Dorsolateral prefrontal cortex (tissue), 120 donors: ENCODE measurements at regions of chrX and their contacts with region 1.

Region 1: GRCh38 chrX:72126539-72127140 is 5.1 kb downstream of the RTL5 start:
- DNase-seq: peak; percentile 77 to 93 (median 84)
- H3K4me3 ChIP-seq: no peak overlapping the region
- H3K27ac ChIP-seq: peak overlapping the region in 34 of 59 donors; percentile 7 to 85 (median 45)
- H3K27me3 ChIP-seq: peaks cover 0 to 95% (median 33%) of the 10 kb centered on the region in 45 donors
- CTCF ChIP-seq: peak; percentile 35 to 94 (median 84)

Region 2: DNA sequence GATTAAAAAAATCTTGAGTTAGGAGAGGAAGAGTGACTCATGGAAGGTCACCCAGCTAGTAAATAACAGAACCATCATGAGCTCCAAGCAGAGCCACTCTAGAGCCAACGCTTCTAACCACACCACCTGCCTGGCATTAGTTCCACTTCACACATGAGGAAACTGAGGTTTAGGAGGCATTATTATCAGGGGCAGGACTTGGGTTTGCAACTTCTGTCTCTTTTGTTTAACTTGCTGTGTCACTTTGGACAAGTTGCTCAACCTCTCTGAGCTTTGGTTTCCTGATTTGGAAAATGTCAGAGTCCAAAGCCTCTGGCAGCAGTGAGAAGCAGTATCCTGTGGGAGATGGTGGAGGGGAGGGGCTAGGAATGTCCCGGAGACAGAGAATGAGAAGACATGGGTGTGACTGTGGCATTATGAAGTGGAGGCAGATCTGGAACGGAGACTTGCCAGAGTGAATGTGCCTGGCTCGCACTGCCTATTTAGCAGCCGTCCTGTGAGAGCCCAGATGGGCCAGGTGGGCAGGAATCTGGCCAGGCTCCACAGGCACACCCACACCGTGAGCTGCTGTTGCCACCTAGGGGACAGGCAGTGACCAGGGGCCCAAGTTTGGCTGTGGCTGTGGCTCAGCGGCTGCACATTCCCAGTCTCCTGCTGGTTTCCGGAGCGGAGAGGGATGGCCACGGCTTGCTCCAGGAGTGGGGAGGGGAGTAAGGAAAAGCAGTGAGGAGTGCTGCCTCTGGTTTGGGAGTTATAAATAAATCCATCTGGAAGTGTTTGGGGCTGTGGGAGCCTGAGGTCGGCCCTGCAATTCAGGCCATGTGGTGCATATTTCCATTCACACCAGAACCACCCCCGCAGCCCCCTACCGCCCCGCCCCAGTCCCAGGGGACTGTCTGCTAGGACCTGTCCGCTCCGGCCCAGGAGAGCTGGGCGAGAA is 122.6 kb before region 1 on chrX:
- intact Hi-C with region 1: loop called in 1 of 2 experiments (anchors 5 kb)
- DNase-seq: peak in 4 of 10 donors; percentile 36 to 49 (median 40)
- H3K4me3 ChIP-seq: no peak overlapping the region
- H3K27ac ChIP-seq: peak overlapping the region in 11 of 59 donors; percentile 2 to 57 (median 28)
- H3K27me3 ChIP-seq: peaks cover 0 to 88% (median 31%) of the 10 kb centered on the region in 45 donors
- CTCF ChIP-seq: peak in 6 of 56 donors; percentile 8 to 17 (median 12)

Region 3: GRCh38 chrX:72018277-72019112 is 108.1 kb before region 1 on chrX:
- intact Hi-C with region 1: loop called (anchors 2 kb)
- DNase-seq: peak; percentile 59 to 87 (median 70)
- H3K4me3 ChIP-seq: peak overlapping the region in 40 of 59 donors; percentile 5 to 57 (median 30)
- H3K27ac ChIP-seq: peak overlapping the region in 40 of 59 donors; percentile 13 to 81 (median 62)
- H3K27me3 ChIP-seq: peaks cover 0 to 82% (median 31%) of the 10 kb centered on the region in 45 donors
- CTCF ChIP-seq: peak; percentile 31 to 90 (median 73)

Region 4: DNA sequence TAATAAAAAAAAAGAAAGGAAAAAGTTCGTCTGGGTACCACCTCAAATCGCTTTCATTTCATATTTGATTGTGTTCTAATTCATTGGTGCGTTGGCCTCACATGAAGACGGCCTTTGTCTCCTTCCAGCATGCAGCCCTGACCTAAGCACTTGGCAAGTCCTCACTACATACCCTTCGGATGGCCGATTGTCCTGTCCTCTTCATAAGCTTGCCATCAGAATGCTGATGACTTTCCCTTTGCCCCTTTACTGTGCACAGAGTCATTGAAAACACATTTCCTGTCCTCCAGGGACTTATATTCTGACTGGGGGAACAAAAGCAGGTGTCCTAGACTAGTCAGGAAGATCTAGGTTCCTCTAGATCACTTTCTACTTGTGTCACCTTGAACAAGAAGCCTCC is 37.9 kb before region 1 on chrX:
- intact Hi-C with region 1: loop called in 1 of 2 experiments (anchors 5 kb)
- DNase-seq: no peak
- H3K4me3 ChIP-seq: no peak overlapping the region
- H3K27ac ChIP-seq: peak overlapping the region in 1 of 59 donors; percentile 33
- H3K27me3 ChIP-seq: peaks cover 0 to 49% (median 13%) of the 10 kb centered on the region in 45 donors
- CTCF ChIP-seq: no peak

Region 5: GRCh38 chrX:72181178-72182125 is 54.8 kb after region 1 on chrX and contains the start of gene PIN4:
- intact Hi-C with region 1: loop called (anchors 5 kb)
- DNase-seq: peak; percentile 75 to 96 (median 92)
- H3K4me3 ChIP-seq: peak within 1 kb of the TSS; percentile 42 to 89 (median 74)
- H3K27ac ChIP-seq: peak within 1 kb of the TSS in 58 of 59 donors; percentile 24 to 91 (median 84)
- H3K27me3 ChIP-seq: peaks cover 0 to 33% (median 0%) of the 10 kb centered on the region in 45 donors
- CTCF ChIP-seq: peak in 7 of 56 donors; percentile 6 to 38 (median 10)
- total RNA-seq, gene PIN4: 8.5 to 21.1 (median 13.4) TPM

Region 6: GRCh38 chrX:72245461-72246089 is 118.9 kb after region 1 on chrX:
- intact Hi-C with region 1: no loop called
- DNase-seq: peak in 7 of 10 donors; percentile 27 to 57 (median 52)
- H3K4me3 ChIP-seq: no peak overlapping the region
- H3K27ac ChIP-seq: no peak overlapping the region
- H3K27me3 ChIP-seq: peaks cover 0 to 39% (median 0%) of the 10 kb centered on the region in 45 donors
- CTCF ChIP-seq: peak; percentile 20 to 78 (median 64)